BJ (cell line): ENCODE measurements at regions of chr5 and their contacts with region 1.

Region 1: DNA sequence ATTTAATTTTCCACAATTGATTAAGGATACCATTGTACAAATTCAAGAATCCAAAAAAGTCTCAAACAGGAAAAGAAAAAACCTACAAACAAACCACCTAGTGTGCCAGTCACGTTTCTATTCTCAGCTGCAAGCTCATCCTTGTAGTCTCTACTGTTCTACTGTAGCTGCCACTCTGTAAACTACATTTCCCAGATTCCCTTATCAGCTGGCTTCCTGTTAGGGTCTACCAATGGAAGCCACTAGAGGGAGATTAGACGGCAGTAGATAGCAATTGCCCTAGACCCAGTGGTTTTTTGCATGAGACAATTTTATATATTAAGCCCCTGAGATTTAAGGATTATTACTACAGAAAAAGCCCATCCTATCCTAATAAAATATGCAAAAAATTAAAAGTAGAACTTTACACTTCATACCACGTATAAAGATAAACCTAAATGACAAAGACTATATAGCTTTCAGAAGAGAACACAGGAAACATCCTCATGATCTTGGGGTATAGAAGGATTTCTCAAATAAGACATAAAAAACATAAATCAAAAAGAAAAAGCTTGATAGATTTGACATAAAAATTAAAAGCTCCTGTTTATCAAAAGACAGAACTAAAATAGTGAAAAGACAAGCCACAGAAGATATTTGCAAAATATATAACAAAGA is 37.4 kb downstream of the P4HA2 start:
- DNase-seq: peak; percentile 26
- H3K4me3 ChIP-seq: no peak overlapping the region
- H3K27me3 ChIP-seq: no peaks in the 10 kb centered on the region
- CTCF ChIP-seq: peak; percentile 88

Region 2: GRCh38 chr5:132180134-132180745 is 10.0 kb before region 1 on chr5:
- CTCF ChIA-PET with region 1: interaction called, 10 read pairs
- POLR2A ChIA-PET with region 1: no interaction called
- DNase-seq: peak; percentile 19
- H3K4me3 ChIP-seq: no peak overlapping the region
- H3K27me3 ChIP-seq: no peaks in the 10 kb centered on the region
- CTCF ChIP-seq: peak; percentile 83

Region 3: DNA sequence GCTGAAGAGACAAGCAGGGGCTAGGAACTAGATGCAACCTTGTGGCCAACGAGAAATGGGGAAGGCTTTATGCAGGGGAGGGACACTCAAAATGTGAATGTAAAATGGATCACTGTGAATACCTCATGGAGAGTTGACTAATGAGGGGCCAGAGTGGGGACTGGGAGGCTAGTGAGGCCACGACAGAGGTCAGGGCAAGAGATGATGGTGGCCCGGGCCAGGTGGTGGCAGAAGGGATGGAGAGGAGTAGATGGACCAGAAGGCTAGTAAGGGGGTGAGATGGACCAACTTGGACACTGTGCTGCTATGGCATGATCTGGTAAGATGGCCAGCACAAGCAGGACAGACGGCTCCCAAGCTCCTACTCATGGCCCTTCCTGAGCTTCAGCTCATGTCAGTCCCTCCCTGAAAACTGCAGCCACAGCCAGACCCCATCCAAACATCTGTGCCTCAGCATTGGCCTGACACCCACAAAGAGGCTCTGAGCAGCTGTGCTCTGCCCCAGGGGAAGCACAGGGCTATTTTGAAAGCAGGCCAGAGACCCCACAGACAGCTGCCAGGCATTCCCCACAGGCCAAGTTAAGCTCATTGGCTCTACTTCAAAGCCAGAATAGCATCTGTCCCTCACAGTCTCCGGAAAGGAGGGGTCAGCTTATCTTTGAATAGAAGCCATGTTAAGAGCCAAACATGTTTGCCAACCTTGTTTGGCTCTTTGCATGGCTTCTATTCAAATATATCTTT is 15.3 kb after region 1 on chr5:
- CTCF ChIA-PET with region 1: interaction called, 43 read pairs
- POLR2A ChIA-PET with region 1: no interaction called
- DNase-seq: no peak
- H3K4me3 ChIP-seq: no peak overlapping the region
- H3K27me3 ChIP-seq: no peaks in the 10 kb centered on the region
- CTCF ChIP-seq: no peak

Region 4: DNA sequence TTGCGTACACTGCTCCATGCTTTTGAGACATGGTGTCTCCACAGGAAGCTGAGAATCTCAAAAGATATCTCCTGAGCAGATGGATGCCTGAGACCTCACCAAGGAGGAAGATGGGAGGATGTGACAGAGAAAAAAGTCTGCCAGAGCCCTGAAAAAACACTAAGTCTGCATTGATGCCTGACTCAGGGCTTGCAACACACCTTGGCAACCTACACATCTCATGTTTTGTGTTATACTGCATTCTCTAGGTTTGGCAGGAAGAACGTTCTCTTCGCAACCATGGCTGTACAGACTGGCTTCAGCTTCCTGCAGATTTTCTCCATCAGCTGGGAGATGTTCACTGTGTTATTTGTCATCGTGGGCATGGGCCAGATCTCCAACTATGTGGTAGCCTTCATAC is 123.1 kb after region 1 on chr5:
- CTCF ChIA-PET with region 1: no interaction called
- POLR2A ChIA-PET with region 1: no interaction called
- DNase-seq: no peak
- H3K4me3 ChIP-seq: no peak overlapping the region
- H3K27me3 ChIP-seq: no peaks in the 10 kb centered on the region
- CTCF ChIP-seq: no peak

Region 5: DNA sequence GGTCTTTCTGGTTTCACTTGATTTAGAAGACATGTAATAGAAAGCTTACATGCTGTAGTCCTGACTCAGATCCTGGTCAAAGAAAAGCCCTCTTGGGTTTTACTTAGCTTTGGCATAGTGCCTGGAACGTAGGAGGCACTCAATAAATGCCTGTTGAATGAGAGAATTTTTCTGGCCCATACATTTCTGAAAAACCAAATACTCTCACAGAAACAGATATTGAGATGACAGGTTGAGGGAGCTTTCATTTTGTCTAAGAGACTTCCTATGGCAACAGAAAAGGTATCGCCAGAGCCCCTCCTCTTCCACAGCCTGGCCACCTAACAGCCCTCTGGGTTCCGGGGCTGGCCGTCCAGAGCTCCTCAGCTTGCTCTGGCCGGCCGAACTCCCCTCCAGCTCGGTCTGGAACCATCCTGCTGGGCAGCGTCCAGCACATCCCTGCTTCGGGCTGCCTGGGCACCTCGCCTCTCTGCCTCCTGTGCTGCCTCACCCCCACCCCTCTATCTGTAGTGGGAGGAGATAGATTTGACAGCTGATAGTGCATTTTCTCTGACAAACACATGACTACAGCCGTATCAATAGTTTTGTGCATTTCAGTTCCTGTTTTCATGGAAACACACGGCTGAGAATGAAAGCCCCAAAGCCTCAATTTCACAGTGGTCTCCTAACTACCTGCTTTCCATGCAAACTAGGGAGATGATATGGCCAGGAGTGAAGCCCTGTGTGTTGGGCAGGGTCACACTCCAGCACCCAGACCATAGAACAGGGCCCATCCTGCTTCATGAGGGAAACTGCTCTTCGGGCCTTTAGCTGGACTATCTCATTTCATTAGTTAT is 484.6 kb after region 1 on chr5:
- CTCF ChIA-PET with region 1: no interaction called
- POLR2A ChIA-PET with region 1: no interaction called
- DNase-seq: peak; percentile 91
- H3K4me3 ChIP-seq: peak overlapping the region; percentile 22
- H3K27me3 ChIP-seq: no peaks in the 10 kb centered on the region
- CTCF ChIP-seq: no peak